Activated T-helper 1 cell treated with anti-CD3 and anti-CD28 coated beads, Interleukin-12 subunit alpha, Interleukin-12 subunit beta, Interleukin-2, Interleukin-4 antibody, amounts not matched to agents 30 ng/mL and 10 ng/mL and 1 ng/mL, durations not matched to agents 14 hours and 24 hours and 36 hours (primary cell): ENCODE measurements at regions of chr2 and their contacts with region 1.

Region 1: GRCh38 chr2:86440631-86441391 is at the start of gene KDM3A:
- DNase-seq: peak; percentile 99
- H3K4me3 Mint-ChIP-seq: peak within 1 kb of the TSS; percentile 96
- H3K27ac Mint-ChIP-seq: peak within 1 kb of the TSS; percentile 98
- H3K4me1 Mint-ChIP-seq: peaks cover 50% of the 10 kb centered on the region
- H3K27me3 Mint-ChIP-seq: peaks cover 11% of the 10 kb centered on the region
- total RNA-seq, gene KDM3A: 61.6 and 67.3 TPM in 2 replicates

Region 2: GRCh38 chr2:85611705-85612587 is 828.9 kb before region 1 on chr2 and contains the start of gene C2orf68:
- intact Hi-C with region 1: loop called (anchors 10 kb)
- DNase-seq: peak; percentile 86
- H3K4me3 Mint-ChIP-seq: peak within 1 kb of the TSS; percentile 98
- H3K27ac Mint-ChIP-seq: peak within 1 kb of the TSS; percentile 89
- H3K4me1 Mint-ChIP-seq: peaks cover 12% of the 10 kb centered on the region
- H3K27me3 Mint-ChIP-seq: no peaks in the 10 kb centered on the region
- total RNA-seq, gene C2orf68: 36.3 and 36.7 TPM in 2 replicates

Region 3: GRCh38 chr2:86337244-86337836 is 103.5 kb before region 1 on chr2 and contains the start of gene REEP1:
- intact Hi-C with region 1: no loop called
- DNase-seq: no peak
- H3K4me3 Mint-ChIP-seq: peak within 1 kb of the TSS; percentile 76
- H3K27ac Mint-ChIP-seq: no peak within 1 kb of the TSS
- H3K4me1 Mint-ChIP-seq: peaks cover 10% of the 10 kb centered on the region
- H3K27me3 Mint-ChIP-seq: peaks cover 68% of the 10 kb centered on the region
- total RNA-seq, gene REEP1: 0.26 and 0.81 TPM in 2 replicates

Region 4: GRCh38 chr2:86368161-86368824 is 72.5 kb before region 1 on chr2:
- intact Hi-C with region 1: loop called (anchors 2 kb)
- DNase-seq: peak; percentile 8
- H3K4me3 Mint-ChIP-seq: peak overlapping the region; percentile 13
- H3K27ac Mint-ChIP-seq: no peak overlapping the region
- H3K4me1 Mint-ChIP-seq: peaks cover 20% of the 10 kb centered on the region
- H3K27me3 Mint-ChIP-seq: no peaks in the 10 kb centered on the region

Region 5: DNA sequence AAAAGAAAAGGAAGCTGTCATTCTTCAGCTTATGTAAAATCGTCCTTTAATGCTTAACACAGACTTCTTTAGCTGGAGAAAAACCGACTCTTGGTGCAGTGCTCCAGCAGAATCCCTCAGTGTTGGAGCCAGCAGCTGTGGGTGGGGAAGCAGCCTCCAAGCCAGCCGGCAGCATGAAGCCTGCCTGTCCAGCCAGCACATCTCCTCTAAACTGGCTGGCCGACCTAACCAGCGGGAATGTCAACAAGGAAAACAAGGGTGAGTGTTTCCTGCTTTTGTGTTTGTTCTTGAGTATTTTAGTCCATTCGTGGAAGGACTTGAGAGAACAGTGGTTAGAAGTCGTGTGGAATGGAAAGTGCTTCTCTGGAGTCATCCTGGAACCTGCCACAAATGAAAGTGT is 39.3 kb after region 1 on chr2:
- intact Hi-C with region 1: loop called (anchors 2 kb)
- DNase-seq: no peak
- H3K4me3 Mint-ChIP-seq: no peak overlapping the region
- H3K27ac Mint-ChIP-seq: no peak overlapping the region
- H3K4me1 Mint-ChIP-seq: peaks cover 66% of the 10 kb centered on the region
- H3K27me3 Mint-ChIP-seq: no peaks in the 10 kb centered on the region

Region 6: GRCh38 chr2:86518481-86518880 is 77.7 kb after region 1 on chr2:
- intact Hi-C with region 1: no loop called
- DNase-seq: no peak
- H3K4me3 Mint-ChIP-seq: no peak overlapping the region
- H3K27ac Mint-ChIP-seq: no peak overlapping the region
- H3K4me1 Mint-ChIP-seq: no peaks in the 10 kb centered on the region
- H3K27me3 Mint-ChIP-seq: no peaks in the 10 kb centered on the region

Region 7: DNA sequence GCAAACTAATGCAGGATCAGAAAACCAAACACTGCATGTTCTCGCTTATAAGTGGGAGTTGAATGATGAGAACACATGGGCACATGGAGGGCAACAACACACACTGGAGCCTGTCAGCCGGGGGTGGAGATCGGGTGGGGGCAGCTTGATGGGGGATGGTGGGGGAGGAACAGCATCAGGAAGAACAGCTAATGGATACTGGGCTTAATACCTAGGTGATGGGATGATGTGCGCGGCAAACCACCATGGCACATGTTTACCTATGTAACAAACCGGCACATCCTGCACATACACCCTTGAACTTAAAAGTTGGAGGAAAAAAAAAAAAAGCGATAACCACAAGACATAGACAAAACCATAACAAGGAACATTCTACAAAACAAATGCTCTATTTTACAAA is 112.1 kb after region 1 on chr2:
- intact Hi-C with region 1: no loop called
- DNase-seq: no peak
- H3K4me3 Mint-ChIP-seq: peak overlapping the region; percentile 49
- H3K27ac Mint-ChIP-seq: peak overlapping the region; percentile 40
- H3K4me1 Mint-ChIP-seq: peaks cover 12% of the 10 kb centered on the region
- H3K27me3 Mint-ChIP-seq: no peaks in the 10 kb centered on the region

Region 8: DNA sequence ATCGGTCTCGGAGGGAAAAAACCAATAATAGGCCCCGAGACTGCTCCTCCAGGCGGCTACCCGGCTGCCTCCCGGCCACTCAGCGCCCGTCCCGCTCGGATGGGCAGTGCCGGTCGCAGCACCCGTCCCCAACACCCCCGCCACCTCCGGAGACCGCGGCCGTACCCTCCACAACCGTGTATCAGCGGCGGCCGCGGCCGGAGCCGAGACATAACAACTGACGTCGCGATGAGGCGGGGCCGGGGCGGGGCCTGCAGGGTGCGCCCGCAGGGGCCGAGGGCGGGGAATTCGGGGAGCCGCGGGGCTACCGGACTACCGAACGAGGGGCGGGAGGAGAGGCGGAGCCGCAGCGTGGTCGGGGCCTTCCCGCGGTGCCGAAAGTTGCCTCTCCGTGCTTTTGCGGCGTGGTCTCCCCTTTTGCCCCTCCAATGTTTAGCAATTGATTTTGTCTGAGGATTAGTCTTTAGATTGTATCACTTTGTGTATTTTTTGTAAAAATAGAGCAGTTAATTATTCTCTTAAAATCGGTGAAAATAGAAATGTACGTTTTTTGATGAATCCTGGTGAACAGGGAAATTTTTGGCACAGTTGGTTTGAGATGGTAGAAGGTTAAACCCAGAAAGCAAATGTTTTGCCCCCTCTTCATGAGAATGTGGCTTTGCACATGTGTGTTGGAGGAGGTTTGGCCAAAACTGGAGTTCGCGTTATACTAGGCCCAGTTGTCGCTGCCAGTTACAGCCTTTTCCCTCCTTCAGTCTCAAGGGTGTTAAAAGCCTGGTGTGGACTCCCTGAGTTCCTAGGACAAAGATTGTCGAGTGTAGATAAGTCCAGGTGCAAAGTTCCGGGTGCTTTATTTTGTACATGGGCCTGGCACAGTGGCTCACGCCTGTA is 183.1 kb after region 1 on chr2 and contains the start of gene RNF103:
- intact Hi-C with region 1: loop called (anchors 1 kb)
- DNase-seq: peak; percentile 92
- H3K4me3 Mint-ChIP-seq: peak within 1 kb of the TSS; percentile 93
- H3K27ac Mint-ChIP-seq: peak within 1 kb of the TSS; percentile 95
- H3K4me1 Mint-ChIP-seq: peaks cover 40% of the 10 kb centered on the region
- H3K27me3 Mint-ChIP-seq: peaks cover 24% of the 10 kb centered on the region
- total RNA-seq, gene RNF103: 13.6 and 14.3 TPM in 2 replicates